GM12878 (cell line): ENCODE measurements at regions of chr7 and their contacts with region 1.

Region 1: GRCh38 chr7:99910976-99911375 is 8.4 kb downstream of the TRIM4 start:
- DNase-seq: no peak
- ATAC-seq: no peak
- H3K4me3 ChIP-seq: no peak overlapping the region
- H3K27ac ChIP-seq: no peak overlapping the region
- H3K4me1 ChIP-seq: no peaks in the 10 kb centered on the region
- H3K27me3 ChIP-seq: no peaks in the 10 kb centered on the region
- CTCF ChIP-seq: no peak
- EP300 ChIP-seq: no peak
- POLR2A ChIP-seq: no peak
- RAD21 ChIP-seq: no peak

Region 2: GRCh38 chr7:99729501-99730237 is 181.3 kb before region 1 on chr7:
- CTCF ChIA-PET with region 1: no interaction called
- POLR2A ChIA-PET with region 1: no interaction called
- RAD21 ChIA-PET with region 1: no interaction called
- SMC1A ChIA-PET with region 1: no interaction called
- in situ Hi-C with region 1: no loop called
- intact Hi-C with region 1: no loop called
- DNase-seq: no peak
- ATAC-seq: no peak
- H3K4me3 ChIP-seq: no peak overlapping the region
- H3K27ac ChIP-seq: no peak overlapping the region
- H3K4me1 ChIP-seq: no peaks in the 10 kb centered on the region
- H3K27me3 ChIP-seq: no peaks in the 10 kb centered on the region
- CTCF ChIP-seq: no peak
- EP300 ChIP-seq: no peak
- POLR2A ChIP-seq: no peak
- RAD21 ChIP-seq: no peak

Region 3: DNA sequence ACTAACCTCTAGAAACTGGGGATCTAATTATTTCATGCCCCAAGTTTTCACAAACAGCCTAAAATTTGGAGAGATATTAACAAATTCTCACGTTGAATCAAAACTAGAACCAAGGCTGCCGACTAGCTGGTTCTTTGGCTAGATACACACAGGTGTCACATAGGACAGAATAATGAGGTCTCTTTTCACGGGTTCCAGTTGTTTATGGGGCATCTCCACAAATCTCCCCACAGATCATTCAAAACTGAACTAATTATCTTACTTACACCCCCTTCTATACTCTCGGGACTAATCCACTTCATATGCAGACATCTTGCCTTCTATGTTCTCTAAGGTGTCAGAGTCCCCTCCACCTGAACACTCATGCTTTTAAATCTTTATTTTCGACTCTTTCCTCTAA is 17.7 kb before region 1 on chr7:
- CTCF ChIA-PET with region 1: interaction called, 10 read pairs
- POLR2A ChIA-PET with region 1: no interaction called
- RAD21 ChIA-PET with region 1: no interaction called
- SMC1A ChIA-PET with region 1: interaction called, 7 read pairs
- in situ Hi-C with region 1: no loop called
- intact Hi-C with region 1: no loop called
- DNase-seq: no peak
- ATAC-seq: peak; percentile 56
- H3K4me3 ChIP-seq: no peak overlapping the region
- H3K27ac ChIP-seq: no peak overlapping the region
- H3K4me1 ChIP-seq: peaks cover 7% of the 10 kb centered on the region
- H3K27me3 ChIP-seq: no peaks in the 10 kb centered on the region
- CTCF ChIP-seq: no peak
- EP300 ChIP-seq: no peak
- POLR2A ChIP-seq: no peak
- RAD21 ChIP-seq: no peak

Region 4: DNA sequence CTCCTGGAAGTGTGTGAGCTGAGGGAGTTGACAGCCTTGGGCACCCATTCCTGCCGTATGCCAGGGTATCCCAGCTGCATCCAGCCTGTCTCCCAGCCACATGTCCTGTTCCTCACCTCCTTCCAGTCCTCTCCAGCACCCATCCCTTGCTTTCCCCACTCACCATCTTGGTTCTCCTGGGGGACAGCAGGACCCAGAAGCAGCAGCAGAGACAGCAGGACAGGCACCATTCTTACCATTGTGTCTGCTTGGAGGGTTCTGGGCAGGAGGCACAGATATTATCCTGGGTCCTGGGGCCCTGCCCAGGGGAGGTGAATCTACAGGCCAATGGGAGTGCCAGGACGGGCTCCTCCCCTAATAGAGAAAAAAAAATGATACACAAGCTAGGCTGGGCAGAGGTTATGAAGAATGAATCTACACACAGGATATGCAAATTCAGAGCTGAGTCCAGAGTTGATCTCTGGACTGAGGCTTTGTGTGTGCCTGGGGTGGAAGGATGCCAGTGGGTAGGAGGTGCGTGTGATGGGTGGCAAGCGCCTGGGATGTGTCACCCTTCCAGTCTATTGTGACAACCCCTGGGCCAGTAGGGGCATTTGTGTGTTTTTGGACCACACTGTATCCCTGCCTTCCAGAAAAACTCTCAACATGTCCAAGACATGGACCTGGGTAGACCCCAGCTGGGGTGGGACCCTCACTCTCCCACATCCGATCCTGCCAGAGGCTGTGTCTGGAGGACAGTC is 65.0 kb after region 1 on chr7 and contains the start of gene AZGP1:
- CTCF ChIA-PET with region 1: interaction called, 22 read pairs
- POLR2A ChIA-PET with region 1: no interaction called
- RAD21 ChIA-PET with region 1: interaction called, 4 read pairs
- SMC1A ChIA-PET with region 1: interaction called, 5 read pairs
- in situ Hi-C with region 1: no loop called
- intact Hi-C with region 1: loop called (anchors 5 kb)
- DNase-seq: no peak
- ATAC-seq: peak; percentile 68
- H3K4me3 ChIP-seq: no peak within 1 kb of the TSS
- H3K27ac ChIP-seq: no peak within 1 kb of the TSS
- H3K4me1 ChIP-seq: no peaks in the 10 kb centered on the region
- H3K27me3 ChIP-seq: no peaks in the 10 kb centered on the region
- CTCF ChIP-seq: no peak
- EP300 ChIP-seq: no peak
- POLR2A ChIP-seq: no peak
- RAD21 ChIP-seq: no peak
- polyA plus RNA-seq, gene AZGP1: not detected

Region 5: DNA sequence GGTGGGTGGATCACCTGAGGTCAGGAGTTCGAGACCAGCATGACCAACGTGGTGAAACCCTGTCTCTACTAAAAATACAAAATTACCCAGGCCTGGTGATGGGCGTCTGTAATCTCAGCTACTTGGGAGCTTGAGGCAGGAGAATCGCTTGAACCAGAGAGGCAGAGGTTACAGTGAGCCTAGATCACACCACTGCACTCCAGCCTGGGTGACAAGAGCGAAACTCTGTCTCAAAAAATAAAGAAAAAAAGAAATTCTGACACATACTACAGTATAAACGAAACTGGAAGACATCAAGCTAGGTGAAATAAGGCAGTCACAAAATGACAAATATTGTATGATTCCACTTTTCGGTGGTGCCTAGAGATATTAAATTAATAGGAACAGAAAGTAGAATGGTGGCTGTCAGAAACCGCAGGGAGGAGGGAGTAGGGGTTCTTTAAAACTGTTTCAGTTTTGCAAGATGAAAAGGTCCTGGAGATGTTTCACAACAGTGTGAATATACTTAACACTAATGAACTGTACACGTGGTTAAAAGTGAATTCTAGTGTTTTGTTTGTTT is 485.5 kb after region 1 on chr7:
- CTCF ChIA-PET with region 1: no interaction called
- POLR2A ChIA-PET with region 1: no interaction called
- RAD21 ChIA-PET with region 1: no interaction called
- SMC1A ChIA-PET with region 1: no interaction called
- in situ Hi-C with region 1: no loop called
- intact Hi-C with region 1: no loop called
- DNase-seq: peak; percentile 93
- ATAC-seq: peak; percentile 92
- H3K4me3 ChIP-seq: peak overlapping the region; percentile 43; the same call in 1 of the 2 replicates
- H3K27ac ChIP-seq: peak overlapping the region; percentile 72
- H3K4me1 ChIP-seq: peaks cover 33% of the 10 kb centered on the region
- H3K27me3 ChIP-seq: no peaks in the 10 kb centered on the region
- CTCF ChIP-seq: no peak
- EP300 ChIP-seq: peak; percentile 63 to 92; a peak in 2 of 4 replicates
- POLR2A ChIP-seq: no peak
- RAD21 ChIP-seq: no peak